ENCODE measurements at regions of chr17 and their contacts with region 1.

Region 1: DNA sequence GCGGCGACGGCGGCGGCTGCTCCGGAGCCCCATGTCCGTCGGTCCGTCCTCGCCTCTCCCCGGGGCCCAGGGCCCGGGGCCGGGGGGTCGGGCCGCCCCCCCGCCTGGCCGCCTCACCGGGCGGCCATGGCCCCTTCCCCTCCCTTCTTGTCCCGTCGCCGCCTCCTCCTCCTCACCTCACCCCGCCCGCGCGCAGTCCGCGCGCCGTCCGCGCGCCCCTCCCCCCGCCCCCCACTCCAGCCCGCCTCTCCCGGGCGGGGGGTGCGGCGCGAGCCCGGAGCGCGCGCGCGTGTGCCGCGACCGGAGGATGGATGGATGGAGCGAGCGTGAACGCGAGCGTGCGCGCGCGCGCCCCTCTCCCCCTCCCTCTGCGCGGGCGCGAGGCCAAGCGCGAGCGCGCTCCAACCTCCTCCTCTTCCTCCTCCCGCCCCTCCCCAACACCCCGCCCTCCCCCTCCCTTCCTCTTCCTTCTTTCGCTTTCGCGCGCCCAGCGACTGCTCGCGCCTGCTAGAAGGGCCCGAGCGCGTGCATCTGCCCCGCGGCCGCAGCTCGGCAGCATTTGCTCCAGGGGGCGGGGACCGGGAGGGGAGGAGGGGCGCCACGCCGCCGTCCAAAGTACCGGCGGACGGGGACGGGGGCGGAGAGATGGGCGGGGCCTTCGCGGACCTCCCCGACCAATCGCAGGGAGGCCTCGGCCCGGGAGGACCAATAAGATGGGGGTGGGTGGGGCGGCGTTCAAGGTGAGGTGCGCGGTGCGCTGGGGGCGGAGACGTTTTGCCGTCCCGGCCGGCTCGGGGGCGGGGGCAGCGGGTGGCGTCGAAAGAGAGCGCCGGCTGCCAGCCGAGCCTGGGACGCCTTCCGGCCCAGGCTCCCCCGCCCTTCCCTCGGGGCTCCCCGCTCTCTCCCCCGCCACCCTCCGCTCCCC is at the start of gene ATXN7L3:
- ATAC-seq: peak; percentile 64 to 85 (median 78)
- H3K4me3 ChIP-seq: peak within 1 kb of the TSS; percentile 70 to 99 (median 86)
- H3K27ac ChIP-seq: peak within 1 kb of the TSS; percentile 97 to 98
- H3K4me1 ChIP-seq: peaks cover 15 to 16% of the 10 kb centered on the region in 2 donors
- total RNA-seq, gene ATXN7L3: 32.3 to 59.2 (median 50.3) TPM

Region 2: DNA sequence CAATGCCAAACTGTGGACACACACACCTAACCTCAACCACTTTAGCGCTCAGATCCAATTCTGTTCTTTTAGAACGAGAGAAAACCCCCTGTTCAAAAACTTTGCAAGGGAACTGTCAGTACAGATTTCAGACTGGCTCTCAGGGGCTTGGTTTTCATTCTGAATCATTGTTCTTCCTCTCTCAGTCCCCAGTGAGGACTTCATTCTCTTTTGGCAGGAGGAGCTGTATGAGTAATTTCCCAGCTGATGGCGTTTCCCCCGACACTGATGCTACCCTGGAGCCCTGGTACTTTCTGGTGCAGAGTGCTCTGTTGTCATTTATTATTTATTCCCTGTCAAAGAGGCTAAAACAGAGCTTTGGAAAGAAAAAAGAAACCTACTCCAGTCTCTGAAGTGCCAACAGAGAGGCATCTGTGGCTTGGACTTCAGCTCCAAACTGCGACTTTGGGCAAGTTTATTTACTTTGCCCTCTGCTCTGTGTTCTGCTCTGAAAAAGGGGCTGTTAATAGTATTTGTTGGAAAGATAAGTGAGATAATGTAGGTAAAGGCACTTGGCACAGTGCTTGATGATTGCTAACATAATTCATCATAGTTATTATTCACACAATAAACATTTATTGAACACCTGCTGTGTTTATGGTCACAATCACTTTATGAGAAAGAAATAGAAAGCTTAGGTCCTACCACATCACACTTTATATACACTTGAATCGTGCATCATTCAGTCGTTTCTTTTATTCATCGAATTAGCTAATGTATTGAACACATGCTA is 682.0 kb before region 1 on chr17:
- in situ Hi-C with region 1: no loop called
- ATAC-seq: peak in 2 of 8 experiments; percentile 47 to 56
- H3K4me3 ChIP-seq: no peak overlapping the region
- H3K27ac ChIP-seq: no peak overlapping the region
- H3K4me1 ChIP-seq: no peaks in the 10 kb centered on the region

Region 3: DNA sequence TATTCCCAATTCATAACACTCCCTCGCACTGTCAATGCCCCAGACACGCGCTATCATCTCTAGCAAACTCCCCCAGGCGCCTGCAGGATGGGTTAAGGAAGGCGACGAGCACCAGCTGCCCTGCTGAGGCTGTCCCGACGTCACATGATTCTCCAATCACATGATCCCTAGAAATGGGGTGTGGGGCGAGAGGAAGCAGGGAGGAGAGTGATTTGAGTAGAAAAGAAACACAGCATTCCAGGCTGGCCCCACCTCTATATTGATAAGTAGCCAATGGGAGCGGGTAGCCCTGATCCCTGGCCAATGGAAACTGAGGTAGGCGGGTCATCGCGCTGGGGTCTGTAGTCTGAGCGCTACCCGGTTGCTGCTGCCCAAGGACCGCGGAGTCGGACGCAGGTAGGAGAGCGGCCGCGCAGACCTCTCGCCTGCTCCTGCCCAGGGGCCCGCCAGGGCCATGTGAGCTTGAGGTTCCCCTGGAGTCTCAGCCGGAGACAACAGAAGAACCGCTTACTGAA is 145.2 kb after region 1 on chr17 and contains the start of gene GRN:
- in situ Hi-C with region 1: loop called in 3 of 9 experiments (anchors 25 kb)
- ATAC-seq: peak; percentile 93 to 99 (median 98)
- H3K4me3 ChIP-seq: peak within 1 kb of the TSS; percentile 50 to 83 (median 62)
- H3K27ac ChIP-seq: peak within 1 kb of the TSS; percentile 10 to 44
- H3K4me1 ChIP-seq: peaks cover 4 to 8% of the 10 kb centered on the region in 2 donors
- total RNA-seq, gene GRN: 19.0 to 448 (median 77.5) TPM

Measured in motor neuron (in vitro differentiated cells).